Ovary (tissue), 10 donors: ENCODE measurements at regions of chr11 and their contacts with region 1.

Region 1: DNA sequence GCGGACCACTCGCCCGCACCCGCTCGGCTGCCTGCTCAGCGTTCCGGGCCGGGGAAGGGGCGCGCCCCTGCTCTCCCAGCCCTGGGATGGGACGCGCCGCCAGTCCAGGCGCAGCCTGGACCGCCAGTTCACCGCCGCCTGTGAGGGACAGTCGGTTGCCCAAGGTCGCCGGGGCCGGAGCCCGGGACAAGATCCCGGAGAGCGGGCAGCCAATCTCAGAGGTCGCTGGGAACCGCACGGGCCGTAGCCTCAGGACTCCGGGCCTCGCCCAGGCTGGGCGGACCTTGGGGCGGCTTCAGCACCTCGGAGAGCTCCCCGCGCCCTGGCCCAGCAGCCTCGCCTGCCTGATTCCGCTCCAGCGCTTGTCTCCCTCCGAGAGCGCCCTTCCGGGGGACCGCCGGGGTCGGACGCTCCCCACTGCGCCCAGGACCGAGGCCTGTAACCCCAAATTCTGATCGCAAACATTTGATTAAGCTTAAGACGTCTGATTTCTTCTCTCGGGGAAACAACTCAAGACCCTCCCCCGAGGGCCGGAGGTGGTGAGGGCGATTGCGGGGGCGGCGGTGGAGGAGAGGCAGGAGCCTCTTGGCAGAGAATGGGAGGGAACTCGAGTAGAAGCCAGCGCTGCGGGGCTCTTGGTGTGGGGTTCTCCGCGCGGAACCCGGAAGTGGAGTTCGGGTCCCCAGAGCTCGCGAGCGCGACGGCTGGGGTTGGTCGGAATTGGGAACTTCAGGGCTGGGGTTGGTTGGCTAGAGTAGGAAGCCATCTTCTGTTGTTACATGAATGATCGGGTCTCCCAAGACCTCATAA is 1.1 kb upstream of the CHRM4 start:
- DNase-seq: peak; percentile 80 to 92 (median 87)
- H3K4me3 ChIP-seq: no peak overlapping the region
- H3K27ac ChIP-seq: no peak overlapping the region
- H3K4me1 ChIP-seq: peaks cover 19% of the 10 kb centered on the region
- H3K27me3 ChIP-seq: peaks cover 4% of the 10 kb centered on the region
- CTCF ChIP-seq: no peak
- EP300 ChIP-seq: no peak
- POLR2A ChIP-seq: no peak

Region 2: GRCh38 chr11:46616998-46617675 is 224.5 kb after region 1 on chr11 and contains the starts of genes ATG13 and HARBI1:
- intact Hi-C with region 1: loop called (anchors 5 to 10 kb)
- DNase-seq: peak; percentile 83 to 91 (median 84)
- H3K4me3 ChIP-seq: peak within 1 kb of the TSS; percentile 99
- H3K27ac ChIP-seq: peak within 1 kb of the TSS; percentile 88 to 93
- H3K4me1 ChIP-seq: peaks cover 1% of the 10 kb centered on the region
- H3K27me3 ChIP-seq: no peaks in the 10 kb centered on the region
- CTCF ChIP-seq: no peak
- EP300 ChIP-seq: no peak
- POLR2A ChIP-seq: peak; percentile 35
- total RNA-seq, gene ATG13: 41.8 to 60.1 (median 54.5) TPM
- total RNA-seq, gene HARBI1: 1.4 to 4.9 (median 3.2) TPM